ENCODE measurements at regions of chr16 and their contacts with region 1.

Region 1: GRCh38 chr16:77711775-77712174 is 10.5 kb upstream of the NUDT7 start:
- DNase-seq: no peak
- H3K4me3 ChIP-seq: no peak overlapping the region
- H3K27ac ChIP-seq: no peak overlapping the region
- H3K4me1 ChIP-seq: no peaks in the 10 kb centered on the region
- H3K27me3 ChIP-seq: no peaks in the 10 kb centered on the region
- CTCF ChIP-seq: no peak
- POLR2A ChIP-seq: no peak

Region 2: GRCh38 chr16:77686385-77686784 is 25.4 kb before region 1 on chr16:
- intact Hi-C with region 1: loop called (anchors 2 kb)
- DNase-seq: no peak
- H3K4me3 ChIP-seq: no peak overlapping the region
- H3K27ac ChIP-seq: no peak overlapping the region
- H3K4me1 ChIP-seq: no peaks in the 10 kb centered on the region
- H3K27me3 ChIP-seq: no peaks in the 10 kb centered on the region
- CTCF ChIP-seq: no peak
- POLR2A ChIP-seq: no peak

Region 3: GRCh38 chr16:78624366-78624765 is 912.6 kb after region 1 on chr16:
- intact Hi-C with region 1: loop called (anchors 5 kb)
- DNase-seq: no peak
- H3K4me3 ChIP-seq: no peak overlapping the region
- H3K27ac ChIP-seq: no peak overlapping the region
- H3K4me1 ChIP-seq: no peaks in the 10 kb centered on the region
- H3K27me3 ChIP-seq: no peaks in the 10 kb centered on the region
- CTCF ChIP-seq: no peak
- POLR2A ChIP-seq: no peak

Measured in breast epithelium (tissue), 4 donors.